ENCODE measurements at regions of chr10 and their contacts with region 1.

Region 1: DNA sequence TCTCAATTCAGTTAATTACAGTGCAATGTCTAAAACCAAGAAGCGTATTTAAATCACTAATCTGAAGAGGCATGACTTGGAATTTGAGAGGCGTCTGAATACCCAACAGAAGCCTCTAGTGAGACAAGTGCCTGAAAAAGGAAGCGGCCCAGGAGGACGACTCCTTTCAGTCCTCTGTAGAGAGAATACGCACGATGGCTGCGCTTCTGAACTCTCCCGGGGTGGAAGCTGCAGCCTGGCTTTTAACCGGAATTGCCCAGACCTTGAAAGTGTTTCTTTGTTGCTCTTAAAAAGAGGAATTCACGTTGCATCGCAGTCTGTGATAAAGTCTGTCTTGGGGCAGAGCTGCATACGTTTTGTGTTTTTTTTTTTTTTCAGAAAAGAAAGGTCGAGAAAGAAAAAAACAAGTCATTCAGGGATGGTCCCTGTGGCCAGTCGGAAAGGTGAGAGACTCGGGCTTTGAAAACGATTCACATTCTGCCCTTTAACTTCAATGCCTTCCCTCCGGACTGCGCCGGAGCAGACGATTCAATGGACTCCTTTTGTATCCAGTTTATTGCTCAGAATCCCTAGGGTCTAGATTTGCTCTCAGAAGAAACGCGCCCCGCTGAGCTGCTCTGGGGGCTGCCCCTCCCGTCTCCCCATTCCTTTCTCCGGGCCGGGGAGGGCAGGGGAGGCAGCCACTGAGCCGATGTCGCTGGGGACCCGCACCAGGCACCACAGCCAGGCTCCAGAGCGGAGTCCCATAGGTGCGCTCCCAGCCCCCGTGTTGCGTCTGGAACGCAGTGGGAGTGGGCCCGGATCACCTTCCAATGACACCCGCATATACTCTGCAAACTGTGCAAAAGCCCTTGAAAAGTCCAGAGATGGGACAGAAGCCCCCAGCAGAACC is 994 bp upstream of the PTF1A start:
- DNase-seq: peak in 1 of 2 experiments; percentile 62
- H3K4me3 ChIP-seq: peak overlapping the region in 2 of 4 experiments; percentile 10 to 54; a peak in 3 of 8 replicates
- H3K27ac ChIP-seq: no peak overlapping the region
- H3K4me1 ChIP-seq: peaks cover 7 to 15% (median 12%) of the 10 kb centered on the region in 4 experiments
- H3K27me3 ChIP-seq: peaks cover 87 to 99% (median 95%) of the 10 kb centered on the region in 4 experiments
- CTCF ChIP-seq: no peak
- EP300 ChIP-seq: no peak
- POLR2A ChIP-seq: no peak
- RAD21 ChIP-seq: no peak

Region 2: GRCh38 chr10:23171223-23171876 is 19.8 kb before region 1 on chr10:
- CTCF ChIA-PET with region 1: interaction called, 10 read pairs
- POLR2A ChIA-PET with region 1: interaction called, 4 read pairs
- DNase-seq: peak in 1 of 2 experiments; percentile 81
- H3K4me3 ChIP-seq: no peak overlapping the region
- H3K27ac ChIP-seq: no peak overlapping the region
- H3K4me1 ChIP-seq: peaks cover 2 to 10% (median 5%) of the 10 kb centered on the region in 4 experiments; a peak in 6 of 7 replicates
- H3K27me3 ChIP-seq: peaks cover 63 to 83% (median 80%) of the 10 kb centered on the region in 4 experiments
- CTCF ChIP-seq: no peak
- EP300 ChIP-seq: no peak
- POLR2A ChIP-seq: no peak
- RAD21 ChIP-seq: no peak

Region 3: DNA sequence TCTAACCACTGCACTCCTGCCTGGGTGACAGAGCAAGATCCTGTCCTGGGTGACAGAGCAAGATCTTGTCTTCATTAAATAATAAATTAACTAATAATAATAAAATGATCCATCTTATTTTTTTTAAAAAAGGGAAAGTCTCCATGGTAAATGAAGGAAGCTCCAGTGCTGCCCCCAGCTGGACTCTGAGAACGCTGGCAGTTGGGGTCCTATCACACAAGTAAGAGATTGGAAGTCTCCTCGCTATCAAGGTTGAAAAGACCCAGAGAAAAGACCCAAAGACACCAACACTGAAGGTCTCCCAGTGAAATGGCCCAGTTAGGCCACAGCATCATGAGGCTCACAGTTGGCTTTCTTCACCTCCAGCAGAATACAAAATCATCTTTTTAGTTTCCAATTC is 167.2 kb after region 1 on chr10:
- CTCF ChIA-PET with region 1: no interaction called
- POLR2A ChIA-PET with region 1: no interaction called
- DNase-seq: no peak
- H3K4me3 ChIP-seq: no peak overlapping the region
- H3K27ac ChIP-seq: no peak overlapping the region
- H3K4me1 ChIP-seq: no peaks in the 10 kb centered on the region
- H3K27me3 ChIP-seq: no peaks in the 10 kb centered on the region
- CTCF ChIP-seq: peak; percentile 25 to 39 (median 34)
- EP300 ChIP-seq: no peak
- POLR2A ChIP-seq: no peak
- RAD21 ChIP-seq: peak; percentile 34 to 47; a peak in 3 of 4 replicates

Region 4: DNA sequence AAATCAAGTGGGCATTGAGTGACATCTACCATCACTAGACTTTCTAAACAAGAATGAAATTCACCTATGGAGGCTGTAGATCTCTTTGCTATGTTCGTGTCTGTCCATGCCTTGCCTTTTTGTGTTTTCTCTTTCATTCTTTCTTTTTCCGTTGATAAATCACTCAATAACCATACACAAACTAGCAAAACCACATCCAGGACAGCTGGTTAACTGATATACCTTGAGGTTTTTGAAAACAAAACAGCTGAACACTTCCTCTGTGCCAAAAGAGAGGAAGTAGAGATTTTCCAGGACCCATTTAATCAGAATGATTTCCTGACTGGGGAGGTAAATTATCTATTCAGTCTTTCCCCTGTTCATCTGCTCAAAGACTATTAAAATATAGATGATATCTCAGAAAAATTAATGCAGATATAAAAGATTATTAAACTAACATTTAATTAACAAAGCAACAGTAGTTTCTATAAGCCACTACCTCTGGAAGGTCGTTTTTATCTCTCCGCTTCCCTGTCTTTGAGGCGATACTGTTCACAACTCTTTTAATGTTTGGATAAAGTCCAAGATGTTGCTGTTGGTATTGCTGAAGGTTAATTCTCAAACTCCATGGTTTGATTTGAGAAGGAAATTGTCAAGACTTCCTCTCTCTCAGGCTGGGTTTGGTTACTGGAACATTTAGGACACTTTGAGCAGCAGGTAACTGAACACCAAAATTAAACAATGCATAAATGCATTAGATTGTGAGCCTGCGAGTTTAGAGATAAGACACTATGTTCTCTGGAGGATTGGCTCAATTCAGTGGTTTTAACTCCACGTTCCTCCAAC is 177.9 kb after region 1 on chr10:
- CTCF ChIA-PET with region 1: no interaction called
- POLR2A ChIA-PET with region 1: no interaction called
- DNase-seq: no peak
- H3K4me3 ChIP-seq: no peak overlapping the region
- H3K27ac ChIP-seq: no peak overlapping the region
- H3K4me1 ChIP-seq: no peaks in the 10 kb centered on the region
- H3K27me3 ChIP-seq: no peaks in the 10 kb centered on the region
- CTCF ChIP-seq: no peak
- EP300 ChIP-seq: no peak
- POLR2A ChIP-seq: no peak
- RAD21 ChIP-seq: no peak

Measured in H1 (cell line).